Activated B cell treated with CpG ODN at 0.5 μM for 24 hours (primary cell): ENCODE measurements at regions of chrX and their contacts with region 1.

Region 1: GRCh38 chrX:13440176-13440575 is 120.3 kb upstream of the ATXN3L start:
- DNase-seq: no peak
- ATAC-seq: no peak
- H3K4me3 Mint-ChIP-seq: no peak overlapping the region
- H3K27ac Mint-ChIP-seq: no peak overlapping the region
- H3K4me1 Mint-ChIP-seq: peaks cover 42% of the 10 kb centered on the region
- H3K27me3 Mint-ChIP-seq: no peaks in the 10 kb centered on the region
- CTCF ChIP-seq: no peak

Region 2: GRCh38 chrX:13478740-13479451 is 38.7 kb after region 1 on chrX:
- CTCF ChIA-PET with region 1: no interaction called
- POLR2A ChIA-PET with region 1: no interaction called
- intact Hi-C with region 1: loop called (anchors 5 kb)
- DNase-seq: no peak
- ATAC-seq: no peak
- H3K4me3 Mint-ChIP-seq: no peak overlapping the region
- H3K27ac Mint-ChIP-seq: no peak overlapping the region
- H3K4me1 Mint-ChIP-seq: peaks cover 18% of the 10 kb centered on the region
- H3K27me3 Mint-ChIP-seq: no peaks in the 10 kb centered on the region
- CTCF ChIP-seq: no peak